ENCODE measurements at regions of chr18 and their contacts with region 1.

Region 1: GRCh38 chr18:24368749-24369148 is 28.9 kb downstream of the OSBPL1A start:
- DNase-seq: no peak
- CTCF ChIP-seq: no peak

Region 2: DNA sequence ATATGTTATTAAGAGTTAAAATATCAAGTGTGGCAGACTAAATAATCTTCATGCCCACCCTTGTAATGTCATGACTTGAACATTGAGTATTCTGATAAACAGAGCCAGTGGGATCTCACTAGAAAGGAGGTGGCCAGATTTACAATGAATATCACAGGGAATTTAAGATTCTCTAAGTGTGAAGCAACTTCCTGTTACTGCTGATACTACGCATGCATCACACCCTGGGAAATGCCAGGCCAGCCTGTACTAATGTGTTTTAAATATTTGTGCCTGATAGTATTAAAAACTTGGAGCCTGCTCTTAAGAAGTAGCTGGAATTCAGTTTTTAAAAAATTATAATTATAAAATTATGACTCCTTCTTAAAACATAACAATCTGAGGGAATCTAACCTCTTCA is 531.2 kb before region 1 on chr18:
- in situ Hi-C with region 1: no loop called
- DNase-seq: no peak
- CTCF ChIP-seq: no peak

Region 3: DNA sequence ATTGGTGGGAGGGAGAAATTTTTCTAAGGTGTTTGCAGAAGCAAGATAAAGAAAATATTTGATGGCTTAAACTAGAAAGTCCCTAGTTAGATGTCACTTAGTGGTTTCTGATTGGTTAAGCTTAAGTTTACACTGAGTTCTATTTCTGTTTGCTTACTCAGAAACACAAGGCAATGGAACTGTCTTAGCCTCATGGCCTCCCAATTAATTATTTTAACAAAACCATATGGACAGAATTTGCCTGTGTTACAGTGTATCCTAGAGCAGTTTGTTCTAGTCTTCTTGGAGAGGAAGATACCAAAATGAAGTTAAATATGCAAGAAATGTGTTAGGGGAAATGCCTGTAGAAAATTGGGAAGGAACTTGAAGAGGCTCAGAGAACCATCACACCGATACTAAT is 53.1 kb after region 1 on chr18:
- in situ Hi-C with region 1: no loop called
- DNase-seq: no peak
- CTCF ChIP-seq: no peak

Region 4: GRCh38 chr18:24488824-24489493 is 120.2 kb after region 1 on chr18:
- in situ Hi-C with region 1: loop called (anchors 10 kb)
- DNase-seq: peak; percentile 57
- CTCF ChIP-seq: peak; percentile 64

Region 5: GRCh38 chr18:24704946-24705630 is 336.3 kb after region 1 on chr18:
- in situ Hi-C with region 1: loop called (anchors 25 kb)
- DNase-seq: no peak
- CTCF ChIP-seq: no peak

Measured in GM13977 (cell line).